ENCODE measurements at regions of chr22 and their contacts with region 1.

Region 1: GRCh38 chr22:20858615-20859416 is at the starts of genes PI4KA and SNAP29:
- DNase-seq: peak; percentile 98 to 100
- H3K4me3 ChIP-seq: peak within 1 kb of the TSS; percentile 82 to 91
- H3K27ac ChIP-seq: peak within 1 kb of the TSS; percentile 89 to 97
- H3K4me1 ChIP-seq: peaks cover 0 to 22% of the 10 kb centered on the region in 2 donors
- H3K27me3 ChIP-seq: no peaks in the 10 kb centered on the region
- CTCF ChIP-seq: peak in 1 of 3 experiments; percentile 47
- total RNA-seq, gene PI4KA: 150 TPM
- total RNA-seq, gene SNAP29: 24.6 TPM

Region 2: DNA sequence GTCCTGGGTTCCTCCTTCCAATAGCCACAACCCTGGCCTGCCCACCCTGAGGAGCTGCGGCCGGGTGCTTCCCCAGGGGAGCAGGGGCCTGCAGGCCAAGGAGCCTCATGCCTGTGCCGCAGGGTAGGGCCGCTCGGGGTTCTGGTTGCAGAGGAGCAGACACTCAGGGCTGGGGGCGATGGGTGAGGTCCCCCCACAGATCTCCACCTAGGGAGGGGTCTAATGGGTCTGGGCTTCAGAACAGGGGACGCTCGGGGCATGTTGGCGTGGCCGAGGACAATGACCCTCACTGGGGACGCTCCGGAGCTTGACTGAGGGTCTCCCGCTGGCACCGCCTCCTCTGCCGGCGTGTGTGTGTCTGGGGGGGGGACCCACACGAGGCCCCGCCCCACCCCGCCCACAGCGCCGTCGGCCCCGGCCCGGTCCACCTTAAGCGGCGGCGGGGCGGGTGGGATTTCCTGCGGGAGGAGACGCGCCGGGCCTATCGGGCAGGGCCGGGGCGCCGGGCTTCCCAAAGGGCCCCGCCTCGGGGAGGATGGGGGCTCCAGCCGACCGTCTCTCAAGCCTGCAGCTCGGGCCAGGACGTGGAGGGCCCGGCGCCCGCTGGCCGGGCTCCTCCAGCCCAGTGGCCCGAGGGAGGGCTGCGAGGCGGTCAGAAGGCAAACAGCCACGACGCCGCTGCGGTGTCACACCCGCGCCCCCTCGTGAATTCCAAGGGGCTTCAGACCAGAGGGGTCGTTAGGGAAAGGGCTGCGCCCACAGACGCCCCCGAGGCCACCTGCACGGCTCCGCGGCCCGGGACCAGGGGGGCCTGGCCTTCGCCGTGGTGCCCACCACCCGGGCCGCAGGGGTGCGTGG is 727.8 kb before region 1 on chr22:
- intact Hi-C with region 1: loop called (anchors 10 kb)
- DNase-seq: peak; percentile 21 to 93
- H3K4me3 ChIP-seq: peak overlapping the region; percentile 82 to 100
- H3K27ac ChIP-seq: peak overlapping the region; percentile 90 to 98
- H3K4me1 ChIP-seq: peaks cover 23 to 37% of the 10 kb centered on the region in 2 donors
- H3K27me3 ChIP-seq: no peaks in the 10 kb centered on the region
- CTCF ChIP-seq: no peak

Region 3: GRCh38 chr22:20550821-20551744 is 307.7 kb before region 1 on chr22:
- intact Hi-C with region 1: loop called (anchors 10 kb)
- DNase-seq: peak in 1 of 2 donors; percentile 85
- H3K4me3 ChIP-seq: peak overlapping the region in 1 of 2 donors; percentile 23
- H3K27ac ChIP-seq: peak overlapping the region; percentile 95 to 98
- H3K4me1 ChIP-seq: peaks cover 35 to 65% of the 10 kb centered on the region in 2 donors
- H3K27me3 ChIP-seq: no peaks in the 10 kb centered on the region
- CTCF ChIP-seq: no peak

Region 4: DNA sequence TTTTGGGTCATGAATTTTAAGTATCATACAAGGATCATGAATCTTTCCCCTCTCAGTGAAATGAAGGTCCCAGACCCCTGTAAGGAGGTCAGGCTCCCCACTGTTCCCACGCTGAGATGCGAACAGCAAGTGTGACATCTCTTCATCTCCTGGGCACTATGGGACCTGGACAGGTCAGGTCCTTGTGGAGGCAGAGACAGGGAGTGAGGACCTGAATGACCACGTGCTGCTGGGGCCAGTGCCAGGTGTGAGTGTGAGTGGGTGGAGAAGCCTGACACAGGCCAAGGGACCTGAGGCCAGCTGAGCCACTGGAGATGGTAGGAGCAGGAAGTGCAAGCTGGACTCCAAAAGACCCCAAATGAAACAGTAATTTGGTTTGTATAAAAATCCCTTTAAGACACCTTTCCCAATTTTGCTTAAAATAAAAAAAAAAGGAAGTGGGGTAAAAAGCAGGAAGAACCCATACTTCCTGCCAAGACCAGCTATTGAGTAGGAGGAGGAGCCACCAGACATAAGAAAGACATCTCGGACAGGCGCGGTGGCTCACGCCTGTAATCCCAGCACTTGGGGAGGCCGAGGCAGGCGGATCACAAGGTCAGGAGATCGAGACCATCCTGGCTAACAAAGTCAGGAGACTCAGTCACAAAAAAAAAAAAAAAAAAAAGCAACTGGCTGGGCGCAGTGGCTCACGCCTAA is 120.3 kb before region 1 on chr22:
- intact Hi-C with region 1: no loop called
- DNase-seq: no peak
- H3K4me3 ChIP-seq: no peak overlapping the region
- H3K27ac ChIP-seq: no peak overlapping the region
- H3K4me1 ChIP-seq: no peaks in the 10 kb centered on the region
- H3K27me3 ChIP-seq: no peaks in the 10 kb centered on the region
- CTCF ChIP-seq: no peak

Region 5: DNA sequence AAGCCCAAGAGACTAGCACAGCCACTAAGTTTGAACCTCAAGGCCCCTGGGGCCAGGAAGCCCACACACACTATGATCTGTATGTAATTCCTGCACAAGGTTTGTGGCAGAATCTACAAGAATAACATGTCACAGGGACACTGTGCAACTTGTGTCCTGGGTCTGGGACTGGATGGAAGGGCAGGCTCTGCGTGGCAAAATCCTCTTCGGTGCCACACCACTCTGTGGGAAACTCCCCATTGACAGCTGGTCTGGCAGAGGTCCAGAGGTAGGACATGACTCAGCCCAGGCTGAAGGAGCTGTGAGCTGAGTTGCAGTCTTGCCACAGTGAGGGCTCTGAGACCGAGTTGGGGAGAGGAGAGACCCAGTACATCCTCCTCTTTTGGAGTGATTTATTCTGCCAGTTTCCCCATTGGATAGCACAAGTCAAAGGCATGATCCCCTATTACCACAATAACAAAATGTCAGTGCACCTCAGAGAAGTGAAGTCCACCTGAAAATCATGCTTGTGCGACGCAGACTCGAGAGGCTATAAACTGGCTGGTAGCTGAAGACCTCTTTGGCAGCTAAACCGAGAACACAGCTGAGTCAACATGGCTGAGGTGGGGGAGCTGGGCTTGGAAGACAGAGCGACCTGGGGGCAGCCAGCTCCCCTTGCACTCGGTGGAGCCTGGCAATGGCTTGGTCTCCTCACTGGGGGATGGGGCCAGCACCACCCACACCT is 108.2 kb before region 1 on chr22:
- intact Hi-C with region 1: no loop called
- DNase-seq: no peak
- H3K4me3 ChIP-seq: no peak overlapping the region
- H3K27ac ChIP-seq: no peak overlapping the region
- H3K4me1 ChIP-seq: no peaks in the 10 kb centered on the region
- H3K27me3 ChIP-seq: no peaks in the 10 kb centered on the region
- CTCF ChIP-seq: no peak

Region 6: GRCh38 chr22:20916983-20917810 is 58.4 kb after region 1 on chr22 and contains the start of gene CRKL:
- intact Hi-C with region 1: loop called (anchors 1 kb)
- DNase-seq: peak; percentile 88 to 98
- H3K4me3 ChIP-seq: peak within 1 kb of the TSS; percentile 95 to 100
- H3K27ac ChIP-seq: peak within 1 kb of the TSS; percentile 92 to 96
- H3K4me1 ChIP-seq: peaks cover 5 to 10% of the 10 kb centered on the region in 2 donors
- H3K27me3 ChIP-seq: no peaks in the 10 kb centered on the region
- CTCF ChIP-seq: peak; percentile 93 to 97 (median 96)
- total RNA-seq, gene CRKL: 21.2 TPM

Region 7: GRCh38 chr22:20981787-20982562 is 123.2 kb after region 1 on chr22 and contains the start of gene LZTR1:
- intact Hi-C with region 1: loop called (anchors 2 kb)
- DNase-seq: peak in 1 of 2 donors; percentile 88
- H3K4me3 ChIP-seq: peak within 1 kb of the TSS; percentile 74 to 90
- H3K27ac ChIP-seq: peak within 1 kb of the TSS; percentile 73 to 85
- H3K4me1 ChIP-seq: peaks cover 11 to 23% of the 10 kb centered on the region in 2 donors
- H3K27me3 ChIP-seq: no peaks in the 10 kb centered on the region
- CTCF ChIP-seq: peak; percentile 42 to 57 (median 49)
- total RNA-seq, gene LZTR1: 72.8 TPM

Region 8: DNA sequence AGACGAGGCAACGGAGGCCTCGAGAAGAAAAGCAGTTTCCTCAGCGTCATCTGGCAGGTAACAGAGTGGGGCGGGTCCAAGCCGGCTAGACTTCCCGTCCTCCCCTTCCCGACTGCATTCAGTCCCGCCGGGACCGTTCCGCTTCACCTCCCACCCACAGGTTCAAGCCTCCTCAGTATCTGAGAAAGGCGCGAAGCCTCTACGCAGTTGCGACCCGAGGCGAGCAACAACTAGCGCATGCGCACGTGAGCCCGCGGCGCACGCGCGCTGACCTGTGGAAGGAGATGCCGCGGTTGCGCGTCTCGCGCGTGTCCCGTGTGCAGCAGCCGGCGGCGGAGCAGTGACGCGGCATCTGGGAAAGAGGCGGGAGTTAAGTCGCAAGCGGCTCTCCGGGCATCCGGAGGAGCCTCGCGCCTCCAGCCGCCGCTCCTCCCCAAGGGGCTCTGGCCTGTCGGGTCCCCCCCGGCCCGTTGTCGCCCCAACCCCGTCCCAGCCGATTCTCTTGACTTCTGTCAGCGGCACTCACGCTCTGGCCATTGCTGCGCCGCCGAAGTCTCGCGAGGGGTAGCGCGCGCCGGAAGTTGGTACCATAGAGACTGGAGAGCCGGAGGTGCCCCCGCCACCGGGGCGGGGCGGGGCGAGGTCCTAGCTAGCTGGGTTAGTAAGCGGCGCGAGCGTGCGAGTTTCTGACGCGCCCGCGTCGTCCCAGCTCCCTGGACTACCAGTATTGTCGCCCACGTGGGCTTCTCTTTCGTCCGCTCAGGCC is 142.9 kb after region 1 on chr22 and contains the start of gene THAP7:
- intact Hi-C with region 1: loop called (anchors 1 kb)
- DNase-seq: peak; percentile 91 to 99
- H3K4me3 ChIP-seq: peak within 1 kb of the TSS; percentile 70 to 94
- H3K27ac ChIP-seq: peak within 1 kb of the TSS; percentile 97 to 98
- H3K4me1 ChIP-seq: peaks cover 13 to 30% of the 10 kb centered on the region in 2 donors
- H3K27me3 ChIP-seq: no peaks in the 10 kb centered on the region
- CTCF ChIP-seq: no peak
- total RNA-seq, gene THAP7: 37.9 TPM

Region 9: DNA sequence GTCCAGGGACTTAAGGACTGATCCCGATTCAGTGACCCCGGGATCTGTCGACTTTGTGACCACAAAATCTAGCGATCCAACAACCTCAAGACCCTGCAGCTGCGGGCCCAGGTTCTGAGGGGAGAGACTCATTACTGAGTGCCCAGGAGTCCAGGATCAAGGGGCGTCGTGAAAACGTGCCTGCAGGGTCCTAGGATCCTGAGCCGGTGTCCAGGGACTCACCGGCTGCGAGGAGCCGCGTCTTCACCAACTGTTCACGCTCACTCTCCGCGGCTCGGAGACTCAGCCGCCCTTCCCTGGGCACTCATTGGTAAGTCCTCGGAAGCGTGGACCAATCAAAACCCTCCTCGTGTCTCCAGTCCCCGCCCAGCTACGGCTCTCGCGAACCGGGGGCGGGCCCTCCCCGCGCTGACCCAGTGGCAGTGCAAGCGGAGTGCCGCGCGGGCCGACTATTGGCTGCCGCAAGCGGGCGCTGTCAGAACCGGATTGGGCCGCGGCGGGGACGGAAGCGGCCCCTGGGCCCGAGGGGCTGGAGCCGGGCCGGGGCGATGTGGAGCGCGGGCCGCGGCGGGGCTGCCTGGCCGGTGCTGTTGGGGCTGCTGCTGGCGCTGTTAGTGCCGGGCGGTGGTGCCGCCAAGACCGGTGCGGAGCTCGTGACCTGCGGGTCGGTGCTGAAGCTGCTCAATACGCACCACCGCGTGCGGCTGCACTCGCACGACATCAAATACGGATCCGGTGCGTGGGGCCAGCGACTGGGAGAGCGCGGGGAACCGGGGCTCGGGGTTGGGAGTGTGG is 783.2 kb after region 1 on chr22 and contains the start of gene SDF2L1:
- intact Hi-C with region 1: loop called (anchors 2 kb)
- DNase-seq: peak; percentile 98 to 100
- H3K4me3 ChIP-seq: peak within 1 kb of the TSS; percentile 63 to 83
- H3K27ac ChIP-seq: peak within 1 kb of the TSS; percentile 69 to 80
- H3K4me1 ChIP-seq: peaks cover 0 to 14% of the 10 kb centered on the region in 2 donors
- H3K27me3 ChIP-seq: no peaks in the 10 kb centered on the region
- CTCF ChIP-seq: peak in 2 of 3 experiments; percentile 10 to 16
- total RNA-seq, gene SDF2L1: 37.4 TPM

Measured in ascending aorta (tissue), 2 donors.